ENCODE measurements at regions of chr17 and their contacts with region 1.

Region 1: GRCh38 chr17:80254396-80255251 is 6.0 kb upstream of the RNF213 start:
- DNase-seq: peak; percentile 91
- H3K4me3 Mint-ChIP-seq: peak overlapping the region; percentile 74
- H3K27ac Mint-ChIP-seq: peak overlapping the region; percentile 95
- H3K4me1 Mint-ChIP-seq: peaks cover 59% of the 10 kb centered on the region
- H3K27me3 Mint-ChIP-seq: no peaks in the 10 kb centered on the region

Region 2: GRCh38 chr17:79839363-79840268 is 415.0 kb before region 1 on chr17 and contains the start of gene CBX4:
- intact Hi-C with region 1: loop called (anchors 10 kb)
- DNase-seq: peak; percentile 96
- H3K4me3 Mint-ChIP-seq: peak within 1 kb of the TSS; percentile 97
- H3K27ac Mint-ChIP-seq: peak within 1 kb of the TSS; percentile 90
- H3K4me1 Mint-ChIP-seq: peaks cover 26% of the 10 kb centered on the region
- H3K27me3 Mint-ChIP-seq: peaks cover 29% of the 10 kb centered on the region
- total RNA-seq, gene CBX4: 18.5 and 19.4 TPM in 2 replicates

Region 3: DNA sequence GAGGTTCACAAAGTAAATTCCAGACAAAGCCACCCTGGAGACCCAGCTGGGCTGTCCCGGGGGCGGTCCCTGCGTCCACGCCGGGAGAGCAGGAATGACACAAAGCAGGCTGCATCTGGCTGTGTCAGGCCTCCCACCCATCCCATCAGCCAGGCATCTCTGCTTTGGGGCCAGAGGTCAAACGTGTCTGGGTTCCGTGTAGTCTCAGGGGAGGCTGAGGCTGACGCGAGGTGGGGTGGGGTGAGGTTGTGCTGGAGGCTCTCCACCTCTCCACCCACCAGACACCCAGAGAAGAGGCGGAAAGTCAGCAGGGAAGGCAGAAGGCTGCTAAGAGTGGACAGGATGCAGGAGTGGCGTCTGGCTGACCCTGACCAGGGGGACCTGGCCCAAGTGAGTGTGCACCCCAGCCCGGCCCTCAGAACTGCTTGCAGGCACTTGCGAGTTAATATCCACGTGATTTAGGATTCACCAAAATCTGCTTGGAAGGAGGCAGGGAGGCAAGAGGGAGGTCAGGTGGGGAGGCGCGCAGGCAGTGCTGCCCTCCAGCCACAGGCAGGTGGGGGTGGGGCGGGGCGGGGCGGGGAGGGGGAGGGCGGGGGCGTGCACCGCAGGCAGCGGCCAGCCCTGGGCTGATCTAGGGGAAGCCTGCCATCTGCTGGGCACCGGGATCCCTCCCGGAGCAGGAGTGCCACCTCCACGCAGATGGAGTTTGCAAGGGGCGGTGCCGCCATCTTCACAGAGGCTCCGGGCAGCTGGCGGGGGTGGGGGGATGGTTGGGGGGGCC is 263.3 kb before region 1 on chr17:
- intact Hi-C with region 1: loop called (anchors 10 kb)
- DNase-seq: peak; percentile 94
- H3K4me3 Mint-ChIP-seq: peak overlapping the region; percentile 79
- H3K27ac Mint-ChIP-seq: no peak overlapping the region
- H3K4me1 Mint-ChIP-seq: peaks cover 23% of the 10 kb centered on the region
- H3K27me3 Mint-ChIP-seq: peaks cover 6% of the 10 kb centered on the region

Region 4: GRCh38 chr17:80082403-80083135 is 172.1 kb before region 1 on chr17:
- intact Hi-C with region 1: loop called (anchors 5 kb)
- DNase-seq: peak; percentile 89
- H3K4me3 Mint-ChIP-seq: no peak overlapping the region
- H3K27ac Mint-ChIP-seq: peak overlapping the region; percentile 42
- H3K4me1 Mint-ChIP-seq: peaks cover 2% of the 10 kb centered on the region
- H3K27me3 Mint-ChIP-seq: no peaks in the 10 kb centered on the region

Region 5: GRCh38 chr17:80101011-80101945 is 153.3 kb before region 1 on chr17 and contains the start of gene GAA:
- intact Hi-C with region 1: loop called (anchors 2 kb)
- DNase-seq: peak; percentile 97
- H3K4me3 Mint-ChIP-seq: peak within 1 kb of the TSS; percentile 95
- H3K27ac Mint-ChIP-seq: peak within 1 kb of the TSS; percentile 87
- H3K4me1 Mint-ChIP-seq: peaks cover 24% of the 10 kb centered on the region
- H3K27me3 Mint-ChIP-seq: peaks cover 8% of the 10 kb centered on the region
- total RNA-seq, gene GAA: 17.9 and 20.7 TPM in 2 replicates

Region 6: GRCh38 chr17:80195731-80196529 is 58.7 kb before region 1 on chr17:
- intact Hi-C with region 1: loop called (anchors 1 kb)
- DNase-seq: peak; percentile 86
- H3K4me3 Mint-ChIP-seq: no peak overlapping the region
- H3K27ac Mint-ChIP-seq: no peak overlapping the region
- H3K4me1 Mint-ChIP-seq: no peaks in the 10 kb centered on the region
- H3K27me3 Mint-ChIP-seq: peaks cover 5% of the 10 kb centered on the region

Region 7: GRCh38 chr17:80219013-80219762 is 35.4 kb before region 1 on chr17:
- intact Hi-C with region 1: loop called (anchors 5 kb)
- DNase-seq: peak; percentile 94
- H3K4me3 Mint-ChIP-seq: peak overlapping the region; percentile 93
- H3K27ac Mint-ChIP-seq: peak overlapping the region; percentile 91
- H3K4me1 Mint-ChIP-seq: peaks cover 11% of the 10 kb centered on the region
- H3K27me3 Mint-ChIP-seq: peaks cover 2% of the 10 kb centered on the region

Measured in activated CD4-positive, alpha-beta T cell treated with anti-CD3 and anti-CD28 coated beads, Interleukin-2, amount 10 ng/mL, durations not matched to agents 24 days and 14 days (primary cell).